Dorsolateral prefrontal cortex (tissue), 120 donors: ENCODE measurements at regions of chr1 and their contacts with region 1.

Region 1: DNA sequence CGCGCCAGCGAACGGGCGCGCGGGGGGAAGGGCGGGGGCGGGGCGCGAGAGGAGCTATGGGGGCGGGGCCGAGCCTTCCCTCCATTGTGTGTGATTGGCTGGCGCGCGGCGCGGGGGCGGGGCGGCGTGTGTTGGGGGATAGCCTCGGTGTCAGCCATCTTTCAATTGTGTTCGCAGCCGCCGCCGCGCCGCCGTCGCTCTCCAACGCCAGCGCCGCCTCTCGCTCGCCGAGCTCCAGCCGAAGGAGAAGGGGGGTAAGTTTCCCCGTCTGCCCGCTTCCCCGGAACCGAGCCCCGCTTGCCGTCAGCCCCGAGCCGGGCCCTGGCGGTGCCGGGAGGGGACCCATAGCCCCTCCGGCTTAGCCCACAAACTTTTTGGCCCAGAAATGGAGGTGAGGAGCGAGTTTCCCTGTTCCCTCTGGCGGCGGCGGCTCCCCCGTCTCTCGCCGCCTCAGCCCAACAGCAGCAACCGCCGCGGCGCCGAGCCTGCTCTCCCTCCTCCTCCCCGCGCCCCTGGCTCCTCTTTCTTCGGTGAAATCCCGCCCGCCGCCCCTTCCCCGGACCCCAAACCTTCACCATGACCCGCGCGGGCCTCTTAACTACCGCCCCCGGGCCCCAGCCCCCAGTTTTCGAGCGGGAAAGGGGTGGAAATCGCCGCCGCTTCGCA is at the start of gene H3-3A:
- DNase-seq: peak; percentile 95 to 98 (median 96)
- H3K4me3 ChIP-seq: peak within 1 kb of the TSS; percentile 70 to 98 (median 88)
- H3K27ac ChIP-seq: peak within 1 kb of the TSS; percentile 96 to 100 (median 100)
- H3K27me3 ChIP-seq: no peaks in the 10 kb centered on the region
- CTCF ChIP-seq: peak in 42 of 56 donors; percentile 10 to 54 (median 36)
- total RNA-seq, gene H3-3A: 134 to 298 (median 177) TPM

Region 2: GRCh38 chr1:225508538-225509375 is 553.9 kb before region 1 on chr1:
- intact Hi-C with region 1: no loop called
- DNase-seq: peak in 1 of 10 donors; percentile 71
- H3K4me3 ChIP-seq: peak overlapping the region in 8 of 59 donors; percentile 2 to 28 (median 15)
- H3K27ac ChIP-seq: peak overlapping the region; percentile 69 to 99 (median 92)
- H3K27me3 ChIP-seq: no peaks in the 10 kb centered on the region
- CTCF ChIP-seq: peak in 14 of 56 donors; percentile 4 to 34 (median 18)

Region 3: GRCh38 chr1:225877580-225877979 is 185.1 kb before region 1 on chr1:
- intact Hi-C with region 1: no loop called
- DNase-seq: peak; percentile 32 to 94 (median 90)
- H3K4me3 ChIP-seq: peak overlapping the region in 57 of 59 donors; percentile 23 to 74 (median 52)
- H3K27ac ChIP-seq: peak overlapping the region; percentile 39 to 100 (median 97)
- H3K27me3 ChIP-seq: no peaks in the 10 kb centered on the region
- CTCF ChIP-seq: peak in 55 of 56 donors; percentile 36 to 78 (median 62)

Region 4: DNA sequence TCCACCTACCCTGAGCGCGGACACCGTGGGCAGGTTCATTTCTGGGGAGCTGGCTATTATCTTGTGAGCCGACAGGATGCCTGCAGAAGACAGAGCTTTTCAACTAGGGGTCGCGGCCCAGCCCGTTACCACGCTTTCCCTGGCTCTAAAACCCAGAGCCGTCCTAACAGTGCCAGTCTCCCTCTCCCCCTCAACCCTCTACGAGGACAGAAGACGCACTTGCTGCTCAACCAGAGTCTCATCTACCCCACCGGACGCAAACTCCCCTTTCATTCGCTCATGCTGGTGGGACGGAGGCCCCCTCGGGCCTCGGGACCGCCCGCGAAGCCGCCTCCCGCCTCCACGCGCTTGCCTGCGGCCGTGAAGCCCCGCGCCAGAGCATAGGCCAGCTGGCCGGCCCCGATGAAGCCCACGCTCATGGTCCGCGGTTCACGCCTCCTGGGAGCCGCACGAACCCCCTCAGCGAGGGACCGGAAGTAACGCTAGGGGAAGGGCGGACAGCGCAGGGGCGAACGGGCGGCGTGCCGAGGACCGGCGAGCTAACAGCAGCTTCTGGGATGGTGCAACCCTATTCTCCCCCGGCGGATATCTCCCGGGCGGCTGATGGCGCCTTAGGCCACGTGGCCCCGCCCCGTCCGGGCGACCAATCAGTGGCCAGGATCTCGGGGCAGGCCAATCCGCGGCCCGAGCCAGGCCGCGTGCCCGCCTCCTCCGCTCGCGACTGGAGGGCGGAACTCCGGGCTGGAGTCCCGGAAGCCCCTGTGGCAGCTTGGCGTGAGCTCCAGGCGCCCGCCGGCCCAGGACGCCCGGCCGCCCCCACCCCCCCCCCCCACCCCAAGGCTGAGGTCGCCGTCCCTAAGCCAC is 138.8 kb before region 1 on chr1 and contains the start of gene PYCR2:
- intact Hi-C with region 1: loop called in 1 of 2 experiments (anchors 5 kb)
- DNase-seq: peak; percentile 89 to 98 (median 94)
- H3K4me3 ChIP-seq: peak within 1 kb of the TSS; percentile 66 to 100 (median 94)
- H3K27ac ChIP-seq: peak within 1 kb of the TSS; percentile 35 to 98 (median 91)
- H3K27me3 ChIP-seq: no peaks in the 10 kb centered on the region
- CTCF ChIP-seq: peak in 32 of 56 donors; percentile 4 to 61 (median 30)
- total RNA-seq, gene PYCR2: 44.8 to 116 (median 65.6) TPM

Region 5: DNA sequence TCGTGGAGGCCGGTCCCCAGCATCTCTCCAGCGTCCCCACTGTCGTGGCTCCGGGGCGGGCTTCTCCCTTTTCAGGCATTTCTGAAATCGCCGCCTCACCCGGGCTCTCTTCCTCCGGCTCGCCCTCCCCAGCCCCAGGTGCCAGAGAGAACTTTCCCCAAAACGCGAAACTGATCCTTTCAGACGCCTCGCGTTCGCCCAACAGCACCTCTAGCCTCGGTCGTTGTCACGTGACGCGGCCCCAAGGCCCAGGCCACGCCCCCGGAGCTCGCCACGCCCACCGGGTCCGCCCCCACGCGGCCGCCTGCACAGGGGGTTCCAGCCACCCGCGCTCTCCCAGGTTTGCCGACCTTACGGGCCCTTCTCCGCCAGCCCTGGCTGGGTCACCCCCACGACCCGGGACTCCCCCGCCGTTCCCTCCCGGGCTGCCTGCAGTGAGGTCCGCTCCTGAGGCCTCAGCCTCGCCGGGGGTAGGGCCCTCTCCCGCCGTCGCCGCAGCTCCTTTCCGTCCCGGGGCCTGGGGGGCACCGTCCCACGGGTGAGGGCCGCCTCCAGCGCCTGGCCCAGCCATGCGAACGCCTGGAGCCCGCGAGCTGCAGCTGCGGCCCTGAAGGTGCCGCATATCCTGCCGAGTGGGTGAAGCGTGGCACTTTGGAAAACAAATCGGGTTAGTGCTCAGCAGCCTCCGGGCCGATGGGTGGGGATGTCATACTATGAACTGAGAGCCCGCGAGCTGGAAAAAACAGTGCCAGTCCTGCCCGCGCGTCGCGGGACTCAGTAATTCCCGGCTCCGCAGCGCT is 20.8 kb after region 1 on chr1:
- intact Hi-C with region 1: loop called in 1 of 2 experiments (anchors 2 kb)
- DNase-seq: peak; percentile 88 to 94 (median 90)
- H3K4me3 ChIP-seq: peak overlapping the region; percentile 51 to 95 (median 83)
- H3K27ac ChIP-seq: peak overlapping the region in 54 of 59 donors; percentile 20 to 89 (median 74)
- H3K27me3 ChIP-seq: no peaks in the 10 kb centered on the region
- CTCF ChIP-seq: peak in 37 of 56 donors; percentile 2 to 62 (median 28)

Region 6: GRCh38 chr1:226121587-226122400 is 59.1 kb after region 1 on chr1:
- intact Hi-C with region 1: loop called (anchors 1 to 2 kb)
- DNase-seq: peak in 5 of 10 donors; percentile 50 to 78 (median 61)
- H3K4me3 ChIP-seq: peak overlapping the region; percentile 47 to 84 (median 71)
- H3K27ac ChIP-seq: peak overlapping the region in 54 of 59 donors; percentile 3 to 89 (median 62)
- H3K27me3 ChIP-seq: no peaks in the 10 kb centered on the region
- CTCF ChIP-seq: peak; percentile 37 to 99 (median 75)

Region 7: GRCh38 chr1:226407497-226408284 is 345.0 kb after region 1 on chr1 and contains the start of gene PARP1:
- intact Hi-C with region 1: loop called in 1 of 2 experiments (anchors 10 kb)
- DNase-seq: peak; percentile 73 to 90 (median 82)
- H3K4me3 ChIP-seq: peak within 1 kb of the TSS; percentile 48 to 90 (median 83)
- H3K27ac ChIP-seq: peak within 1 kb of the TSS; percentile 39 to 92 (median 86)
- H3K27me3 ChIP-seq: no peaks in the 10 kb centered on the region
- CTCF ChIP-seq: peak; percentile 38 to 99 (median 84)
- total RNA-seq, gene PARP1: 74.8 to 140 (median 105) TPM

Region 8: DNA sequence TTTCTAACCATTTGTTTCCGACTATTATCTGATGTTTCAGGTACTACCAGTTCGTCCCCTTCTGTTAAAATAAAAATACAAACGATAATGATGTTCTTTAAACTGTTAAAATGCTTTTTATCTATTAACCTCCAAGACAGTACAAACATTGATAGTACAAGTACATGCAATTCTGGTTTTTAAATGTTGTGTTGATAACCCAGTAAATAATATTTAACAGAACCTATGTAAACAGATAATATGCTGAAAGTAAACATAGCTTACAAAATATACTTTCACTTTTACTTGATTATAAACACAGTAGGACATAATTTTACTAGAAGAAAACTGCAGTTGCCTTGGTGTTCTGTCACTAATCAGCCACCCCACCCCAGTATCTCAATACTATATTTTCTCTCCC is 954.3 kb after region 1 on chr1:
- intact Hi-C with region 1: no loop called
- DNase-seq: no peak
- H3K4me3 ChIP-seq: no peak overlapping the region
- H3K27ac ChIP-seq: peak overlapping the region in 1 of 59 donors; percentile 19
- H3K27me3 ChIP-seq: no peaks in the 10 kb centered on the region
- CTCF ChIP-seq: no peak